ENCODE measurements at regions of chr12 and their contacts with region 1.

Region 1: GRCh38 chr12:57865090-57865751 is 18.7 kb upstream of the CTDSP2 start:
- DNase-seq: peak in 1 of 2 experiments; percentile 73
- H3K4me3 ChIP-seq: peak overlapping the region; percentile 25 to 65 (median 41)
- H3K27ac ChIP-seq: no peak overlapping the region
- H3K4me1 ChIP-seq: peaks cover 0 to 12% (median 8%) of the 10 kb centered on the region in 4 experiments; a peak in 5 of 7 replicates
- H3K27me3 ChIP-seq: peaks cover 0 to 20% (median 10%) of the 10 kb centered on the region in 4 experiments; a peak in 5 of 7 replicates
- CTCF ChIP-seq: no peak
- EP300 ChIP-seq: no peak
- POLR2A ChIP-seq: peak in 1 of 2 experiments; percentile 55; a peak in 1 of 3 replicates
- RAD21 ChIP-seq: no peak

Region 2: GRCh38 chr12:57852620-57853500 is 12.4 kb before region 1 on chr12:
- CTCF ChIA-PET with region 1: interaction called, 58 read pairs
- POLR2A ChIA-PET with region 1: interaction called, 722 read pairs
- DNase-seq: peak; percentile 80 to 85
- H3K4me3 ChIP-seq: peak overlapping the region; percentile 23 to 57 (median 44); a peak in 7 of 8 replicates
- H3K27ac ChIP-seq: peak overlapping the region; percentile 33; the same call in 1 of the 2 replicates
- H3K4me1 ChIP-seq: peaks cover 15 to 28% (median 22%) of the 10 kb centered on the region in 4 experiments
- H3K27me3 ChIP-seq: peaks cover 0 to 3% (median 1%) of the 10 kb centered on the region in 4 experiments; a peak in 2 of 7 replicates
- CTCF ChIP-seq: peak; percentile 17 to 24 (median 23)
- EP300 ChIP-seq: peak in 1 of 2 experiments; percentile 8; a peak in 1 of 3 replicates
- POLR2A ChIP-seq: peak in 1 of 2 experiments; percentile 66; a peak in 2 of 3 replicates
- RAD21 ChIP-seq: peak; percentile 27 to 44

Region 3: GRCh38 chr12:57888409-57889157 is 23.4 kb after region 1 on chr12:
- CTCF ChIA-PET with region 1: interaction called, 36 read pairs
- POLR2A ChIA-PET with region 1: interaction called, 16 read pairs
- DNase-seq: no peak
- H3K4me3 ChIP-seq: peak overlapping the region in 3 of 4 experiments; percentile 4 to 23 (median 19); a peak in 3 of 8 replicates
- H3K27ac ChIP-seq: peak overlapping the region; percentile 4; the same call in 1 of the 2 replicates
- H3K4me1 ChIP-seq: peaks cover 2 to 22% (median 17%) of the 10 kb centered on the region in 4 experiments
- H3K27me3 ChIP-seq: no peaks in the 10 kb centered on the region; a peak in 1 of 7 replicates
- CTCF ChIP-seq: no peak
- EP300 ChIP-seq: no peak
- POLR2A ChIP-seq: peak in 1 of 2 experiments; percentile 59; a peak in 2 of 3 replicates
- RAD21 ChIP-seq: no peak

Region 4: GRCh38 chr12:57893431-57894353 is 28.5 kb after region 1 on chr12:
- CTCF ChIA-PET with region 1: interaction called, 36 read pairs
- POLR2A ChIA-PET with region 1: interaction called, 16 read pairs
- DNase-seq: no peak
- H3K4me3 ChIP-seq: peak overlapping the region in 1 of 4 experiments; percentile 11; a peak in 1 of 8 replicates
- H3K27ac ChIP-seq: no peak overlapping the region
- H3K4me1 ChIP-seq: peaks cover 14 to 38% (median 25%) of the 10 kb centered on the region in 4 experiments
- H3K27me3 ChIP-seq: peaks cover 0 to 10% (median 8%) of the 10 kb centered on the region in 4 experiments; a peak in 4 of 7 replicates
- CTCF ChIP-seq: no peak
- EP300 ChIP-seq: no peak
- POLR2A ChIP-seq: peak; percentile 25 to 68
- RAD21 ChIP-seq: peak in 1 of 2 experiments; percentile 5; a peak in 1 of 4 replicates

Region 5: GRCh38 chr12:58105225-58106119 is 240.3 kb after region 1 on chr12:
- CTCF ChIA-PET with region 1: no interaction called
- POLR2A ChIA-PET with region 1: no interaction called
- DNase-seq: no peak
- H3K4me3 ChIP-seq: no peak overlapping the region
- H3K27ac ChIP-seq: no peak overlapping the region
- H3K4me1 ChIP-seq: no peaks in the 10 kb centered on the region
- H3K27me3 ChIP-seq: no peaks in the 10 kb centered on the region
- CTCF ChIP-seq: peak in 2 of 3 experiments; percentile 25 to 31; a peak in 2 of 4 replicates
- EP300 ChIP-seq: no peak
- POLR2A ChIP-seq: no peak
- RAD21 ChIP-seq: peak; percentile 43 to 59